ENCODE measurements at regions of chr20 and their contacts with region 1.

Region 1: DNA sequence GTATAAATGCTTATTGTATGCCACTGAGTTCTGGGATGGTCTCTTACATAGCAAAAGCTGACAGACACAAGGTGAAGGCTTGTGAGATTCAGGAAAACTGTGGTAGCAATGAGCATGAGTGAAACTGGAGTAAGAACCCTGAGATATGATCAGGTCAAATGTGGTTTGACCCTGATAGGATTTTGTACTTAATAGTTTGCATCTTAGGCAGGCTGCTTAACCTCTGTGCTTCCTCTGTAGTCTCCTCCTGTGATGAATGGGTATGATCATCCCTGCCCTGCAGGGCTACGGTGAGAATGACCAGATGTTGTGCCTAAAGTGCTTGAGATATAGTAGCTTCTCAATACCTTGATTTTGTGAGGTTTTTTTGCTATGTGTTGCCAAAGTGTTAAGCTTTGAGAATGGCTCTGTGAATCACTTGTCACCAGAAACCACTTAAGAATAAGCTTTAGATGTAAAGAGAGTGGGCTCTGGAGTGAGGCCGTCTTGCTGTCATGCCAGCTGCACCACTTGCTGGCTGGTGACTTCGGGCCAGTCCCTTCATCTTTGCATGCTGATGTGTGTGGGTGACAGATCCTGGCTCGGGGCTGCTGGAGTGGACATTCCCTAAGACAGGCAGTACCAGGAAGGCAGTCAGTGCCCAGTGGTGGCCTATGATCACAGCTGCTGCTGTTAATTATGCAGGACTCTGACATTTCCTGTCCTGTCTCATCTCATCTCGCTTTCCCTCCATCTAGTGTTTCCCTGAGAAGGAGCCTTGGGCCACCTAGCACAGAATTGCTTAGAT is 254.7 kb downstream of the NFATC2 start:
- DNase-seq: no peak
- H3K4me3 ChIP-seq: no peak overlapping the region
- H3K27ac ChIP-seq: no peak overlapping the region
- H3K4me1 ChIP-seq: no peaks in the 10 kb centered on the region
- H3K27me3 ChIP-seq: peaks cover 83% of the 10 kb centered on the region
- CTCF ChIP-seq: no peak

Region 2: DNA sequence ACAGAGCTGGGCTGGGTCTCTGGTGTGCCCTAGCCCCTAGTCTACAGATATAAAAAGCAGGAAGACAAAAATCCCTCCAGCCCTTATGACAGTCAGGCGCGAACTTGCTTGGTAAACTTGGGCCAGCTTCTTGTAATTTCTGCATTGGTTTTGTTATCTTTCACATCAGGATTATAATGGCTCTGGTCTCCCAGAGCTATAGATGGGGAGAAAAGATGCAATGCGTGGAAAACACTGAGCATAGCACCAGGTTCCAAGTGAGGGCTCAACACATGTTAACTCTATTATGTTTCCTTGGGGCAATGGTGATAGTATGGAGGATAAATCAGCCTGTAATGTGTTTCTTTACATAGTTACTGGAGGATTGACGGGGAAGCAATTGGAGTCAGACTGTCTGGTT is 18.1 kb before region 1 on chr20:
- CTCF ChIA-PET with region 1: no interaction called
- POLR2A ChIA-PET with region 1: no interaction called
- intact Hi-C with region 1: loop called (anchors 1 kb)
- DNase-seq: no peak
- H3K4me3 ChIP-seq: no peak overlapping the region
- H3K27ac ChIP-seq: no peak overlapping the region
- H3K4me1 ChIP-seq: no peaks in the 10 kb centered on the region
- H3K27me3 ChIP-seq: peaks cover 75% of the 10 kb centered on the region
- CTCF ChIP-seq: no peak

Region 3: DNA sequence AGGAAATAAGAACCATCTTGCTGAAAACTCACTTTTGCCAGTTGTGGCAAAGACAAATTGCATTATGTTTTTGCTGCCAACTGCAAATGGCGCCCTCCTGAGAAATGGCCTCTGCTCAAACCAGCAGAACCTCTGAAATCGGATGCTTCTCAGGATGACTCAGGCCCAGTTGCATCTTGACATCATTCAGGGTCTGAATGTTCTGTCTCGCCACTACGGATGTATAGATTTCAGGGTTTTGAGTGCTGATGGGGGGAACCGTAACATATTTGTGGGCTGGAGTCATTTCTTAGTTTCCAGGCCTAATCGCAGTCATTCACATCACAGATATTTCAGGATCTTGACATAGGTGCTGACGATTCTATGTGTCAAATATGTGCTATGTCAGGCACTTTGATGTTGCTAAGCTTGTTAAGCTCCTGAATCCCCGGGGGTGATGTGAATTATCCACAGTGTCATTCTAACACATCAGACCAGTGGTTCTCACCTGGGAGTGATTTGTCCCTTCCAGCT is 47.6 kb after region 1 on chr20:
- CTCF ChIA-PET with region 1: no interaction called
- POLR2A ChIA-PET with region 1: no interaction called
- intact Hi-C with region 1: no loop called
- DNase-seq: peak in 1 of 2 experiments; percentile 60
- H3K4me3 ChIP-seq: no peak overlapping the region
- H3K27ac ChIP-seq: no peak overlapping the region
- H3K4me1 ChIP-seq: 0 out of 2 replicates have a peak, but pooled peaks cover 7% of the 10 kb centered on the region
- H3K27me3 ChIP-seq: no peaks in the 10 kb centered on the region
- CTCF ChIP-seq: no peak